ENCODE measurements at regions of chr6 and their contacts with region 1.

Region 1: GRCh38 chr6:5003604-5004372 is at the start of gene RPP40:
- DNase-seq: peak; percentile 97
- H3K4me3 Mint-ChIP-seq: peak within 1 kb of the TSS; percentile 90
- H3K27ac Mint-ChIP-seq: peak within 1 kb of the TSS; percentile 95
- H3K4me1 Mint-ChIP-seq: peaks cover 4% of the 10 kb centered on the region
- H3K27me3 Mint-ChIP-seq: no peaks in the 10 kb centered on the region
- total RNA-seq, gene RPP40: 15.1 and 16.4 TPM in 2 replicates

Region 2: GRCh38 chr6:4018172-4018905 is 985.4 kb before region 1 on chr6:
- intact Hi-C with region 1: loop called (anchors 5 kb)
- DNase-seq: peak; percentile 96
- H3K4me3 Mint-ChIP-seq: peak overlapping the region; percentile 99
- H3K27ac Mint-ChIP-seq: peak overlapping the region; percentile 100
- H3K4me1 Mint-ChIP-seq: peaks cover 60% of the 10 kb centered on the region
- H3K27me3 Mint-ChIP-seq: no peaks in the 10 kb centered on the region

Region 3: DNA sequence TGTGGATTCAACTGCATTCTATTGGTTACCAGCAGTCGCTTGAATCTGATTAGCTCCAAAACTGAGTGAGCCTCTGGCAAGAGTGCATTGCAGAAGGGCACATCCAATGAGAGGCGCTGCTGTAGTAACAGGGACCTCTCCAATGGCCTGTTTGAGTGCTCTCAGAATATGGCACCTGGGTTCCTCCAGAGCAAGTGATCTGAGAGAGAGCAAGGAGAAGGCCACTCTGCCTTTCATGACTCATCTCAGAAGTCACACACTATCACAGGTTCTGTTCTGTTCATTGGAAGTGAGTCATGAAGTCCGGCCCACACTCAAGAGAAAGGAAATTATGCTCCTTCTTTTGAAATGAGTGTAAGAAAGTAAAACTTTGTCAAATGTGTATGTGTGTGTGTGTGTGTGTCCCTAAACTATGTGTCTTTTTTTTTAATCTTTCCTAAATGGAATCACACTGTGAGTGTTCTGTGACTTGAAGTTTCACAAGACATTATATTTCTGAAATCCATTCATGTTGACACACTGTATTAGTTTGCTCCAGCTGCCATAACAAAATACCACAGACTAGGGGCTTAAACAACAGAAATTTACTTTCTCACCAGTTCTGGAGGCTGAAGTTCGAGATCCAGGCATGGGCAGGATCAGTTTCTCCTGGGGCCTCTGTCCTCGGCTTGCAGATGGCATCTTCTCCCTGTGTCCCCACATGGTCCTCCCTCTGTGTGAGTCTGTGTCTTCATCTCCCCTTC is 365.9 kb before region 1 on chr6:
- intact Hi-C with region 1: loop called (anchors 5 kb)
- DNase-seq: peak; percentile 8
- H3K4me3 Mint-ChIP-seq: no peak overlapping the region
- H3K27ac Mint-ChIP-seq: peak overlapping the region; percentile 52
- H3K4me1 Mint-ChIP-seq: peaks cover 11% of the 10 kb centered on the region
- H3K27me3 Mint-ChIP-seq: peaks cover 4% of the 10 kb centered on the region

Region 4: DNA sequence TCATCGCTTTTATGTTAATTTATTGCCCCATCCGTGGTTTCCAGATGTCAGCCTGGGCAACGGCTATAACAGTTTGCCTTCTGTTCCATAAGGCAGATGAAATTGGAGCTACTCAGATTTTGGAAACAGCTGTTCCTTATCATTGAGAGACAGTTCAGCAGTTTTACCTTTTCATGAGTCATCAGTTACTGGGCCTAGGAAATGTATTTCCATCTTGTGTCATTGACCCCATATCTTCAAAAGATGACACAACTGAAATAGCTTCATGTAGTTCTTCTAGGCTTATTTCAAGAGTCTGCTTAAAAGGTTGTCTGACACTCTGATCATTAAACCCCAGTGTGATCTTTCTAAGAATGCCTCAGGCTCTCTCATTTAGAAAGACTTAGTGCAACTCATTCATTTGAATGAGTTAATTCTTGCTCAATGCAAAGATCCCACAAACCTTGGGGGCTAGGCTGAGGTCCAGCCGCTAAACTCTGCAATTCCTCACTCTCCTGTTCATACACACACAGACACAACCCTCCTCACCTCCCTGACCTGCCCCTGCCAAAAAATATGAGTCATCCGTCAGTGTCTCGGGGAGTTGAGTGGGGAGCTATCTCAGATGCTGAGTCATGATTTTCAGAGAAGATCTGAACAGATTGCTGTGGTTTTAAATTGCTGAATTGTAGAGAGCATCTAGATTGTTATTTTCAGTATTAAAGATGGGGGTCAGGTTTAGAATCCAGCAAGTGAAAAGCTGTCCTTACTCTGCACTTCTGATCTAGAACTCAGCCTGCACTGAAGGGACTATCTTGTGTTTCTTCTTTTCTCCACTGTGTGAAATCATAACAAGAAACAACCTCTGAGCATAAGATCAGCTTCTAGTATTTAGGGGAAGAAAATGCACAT is 61.8 kb before region 1 on chr6:
- intact Hi-C with region 1: loop called (anchors 2 kb)
- DNase-seq: peak; percentile 26
- H3K4me3 Mint-ChIP-seq: peak overlapping the region; percentile 4
- H3K27ac Mint-ChIP-seq: peak overlapping the region; percentile 20
- H3K4me1 Mint-ChIP-seq: peaks cover 44% of the 10 kb centered on the region
- H3K27me3 Mint-ChIP-seq: no peaks in the 10 kb centered on the region

Region 5: DNA sequence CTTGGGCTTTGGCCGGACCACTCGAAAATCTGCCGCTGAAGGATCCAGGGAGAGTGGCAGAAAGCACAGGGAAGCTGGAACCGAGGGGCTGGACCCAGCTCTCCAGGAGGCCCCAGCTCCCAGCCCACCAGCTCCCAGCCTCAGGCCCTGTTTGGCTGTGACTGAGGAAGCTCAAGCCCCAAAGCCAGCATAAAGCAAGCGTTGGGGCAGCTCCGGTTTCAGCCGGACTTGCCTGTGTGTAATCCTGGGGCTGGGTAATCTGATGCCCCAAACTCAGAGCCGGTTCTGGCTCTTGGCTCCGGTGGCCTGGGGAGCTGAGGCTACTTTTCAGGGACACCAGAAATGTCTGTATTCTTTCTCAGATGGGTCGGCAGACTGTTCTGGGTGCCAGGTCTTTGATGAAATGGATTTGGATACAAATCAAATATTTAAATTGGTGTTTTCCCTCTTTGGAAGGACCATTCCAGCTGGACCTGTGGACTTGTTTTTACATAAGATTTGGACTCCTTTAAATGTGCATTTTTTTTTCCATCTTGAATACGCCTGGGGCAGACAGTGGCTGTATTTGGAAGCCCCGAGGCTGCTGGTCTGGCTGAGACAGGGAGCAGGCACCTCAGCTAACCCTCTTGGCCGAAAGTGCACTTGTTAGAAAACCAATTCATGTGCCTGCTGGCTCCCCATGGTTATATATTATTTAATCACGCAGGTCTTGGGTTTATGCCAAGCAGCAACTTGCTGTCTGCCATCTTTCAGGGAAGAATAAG is 29.6 kb before region 1 on chr6:
- intact Hi-C with region 1: no loop called
- DNase-seq: no peak
- H3K4me3 Mint-ChIP-seq: no peak overlapping the region
- H3K27ac Mint-ChIP-seq: no peak overlapping the region
- H3K4me1 Mint-ChIP-seq: no peaks in the 10 kb centered on the region
- H3K27me3 Mint-ChIP-seq: peaks cover 2% of the 10 kb centered on the region

Region 6: DNA sequence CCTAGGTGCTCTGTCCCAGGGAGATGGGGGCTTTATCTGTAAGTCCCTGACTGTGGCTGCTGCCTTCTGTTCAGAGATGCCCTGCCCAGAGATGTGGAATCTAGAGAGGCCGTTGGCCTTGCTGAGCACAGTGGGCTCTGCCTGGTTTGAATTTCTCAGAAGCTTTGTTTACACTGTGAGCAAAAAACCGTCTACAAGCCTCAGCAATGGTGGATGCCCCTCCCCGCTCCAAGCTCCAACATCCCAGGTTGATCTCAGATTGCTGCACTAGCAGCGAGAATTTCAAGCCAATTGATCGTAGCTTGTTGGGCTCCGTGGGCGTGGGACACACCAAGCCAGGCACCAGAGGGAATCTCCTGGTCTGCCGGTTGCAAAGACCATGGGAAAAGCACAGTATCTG is 16.4 kb after region 1 on chr6:
- intact Hi-C with region 1: no loop called
- DNase-seq: no peak
- H3K4me3 Mint-ChIP-seq: no peak overlapping the region
- H3K27ac Mint-ChIP-seq: no peak overlapping the region
- H3K4me1 Mint-ChIP-seq: no peaks in the 10 kb centered on the region
- H3K27me3 Mint-ChIP-seq: peaks cover 8% of the 10 kb centered on the region

Region 7: DNA sequence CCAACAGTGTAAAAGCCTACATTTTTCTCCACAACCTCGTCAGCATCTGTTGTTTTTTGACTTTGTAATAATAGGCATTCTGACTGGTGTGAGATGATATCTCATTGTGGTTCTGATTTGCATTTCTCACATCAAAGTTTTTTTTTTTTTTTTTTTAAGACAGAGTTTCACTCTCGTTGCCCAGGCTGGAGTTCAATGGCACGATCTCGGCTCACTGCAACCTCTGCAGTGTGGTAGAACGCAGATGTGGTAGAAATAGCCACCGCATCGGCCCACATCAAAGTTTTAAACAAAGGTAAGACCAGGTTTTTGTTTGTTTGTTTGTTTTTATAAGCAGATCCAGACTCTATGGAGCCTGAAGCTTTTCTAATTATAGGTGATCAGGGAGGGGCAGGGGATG is 68.7 kb after region 1 on chr6:
- intact Hi-C with region 1: loop called (anchors 5 kb)
- DNase-seq: no peak
- H3K4me3 Mint-ChIP-seq: no peak overlapping the region
- H3K27ac Mint-ChIP-seq: no peak overlapping the region
- H3K4me1 Mint-ChIP-seq: peaks cover 9% of the 10 kb centered on the region
- H3K27me3 Mint-ChIP-seq: peaks cover 8% of the 10 kb centered on the region

Region 8: GRCh38 chr6:5260661-5261544 is 257.1 kb after region 1 on chr6 and contains the starts of genes FARS2 and LYRM4:
- intact Hi-C with region 1: loop called (anchors 1 kb)
- DNase-seq: peak; percentile 89
- H3K4me3 Mint-ChIP-seq: peak within 1 kb of the TSS; percentile 93
- H3K27ac Mint-ChIP-seq: peak within 1 kb of the TSS; percentile 100
- H3K4me1 Mint-ChIP-seq: peaks cover 41% of the 10 kb centered on the region
- H3K27me3 Mint-ChIP-seq: no peaks in the 10 kb centered on the region
- total RNA-seq, gene FARS2: 20.8 and 23.8 TPM in 2 replicates
- total RNA-seq, gene LYRM4: 47.1 and 48.9 TPM in 2 replicates

Measured in activated T-helper 1 cell treated with anti-CD3 and anti-CD28 coated beads, Interleukin-12 subunit alpha, Interleukin-12 subunit beta, Interleukin-2, Interleukin-4 antibody, amounts not matched to agents 30 ng/mL and 10 ng/mL and 1 ng/mL, durations not matched to agents 14 hours and 24 hours and 36 hours (primary cell).